Activated CD4-positive, alpha-beta memory T cell treated with anti-CD3 and anti-CD28 coated beads, Interleukin-2, amount 10 ng/mL, durations not matched to agents 7 days and 5 days (primary cell): ENCODE measurements at regions of chr17 and their contacts with region 1.

Region 1: GRCh38 chr17:75319904-75320691 is 30.9 kb upstream of the SLC25A19 start:
- DNase-seq: no peak
- H3K4me3 Mint-ChIP-seq: no peak overlapping the region
- H3K27ac Mint-ChIP-seq: no peak overlapping the region
- H3K4me1 Mint-ChIP-seq: peaks cover 22% of the 10 kb centered on the region
- H3K27me3 Mint-ChIP-seq: no peaks in the 10 kb centered on the region

Region 2: GRCh38 chr17:75295201-75296158 is 24.6 kb before region 1 on chr17:
- CTCF ChIA-PET with region 1: interaction called, 12 read pairs
- POLR2A ChIA-PET with region 1: interaction called, 16 read pairs
- DNase-seq: no peak
- H3K4me3 Mint-ChIP-seq: peak overlapping the region; percentile 46
- H3K27ac Mint-ChIP-seq: peak overlapping the region; percentile 87
- H3K4me1 Mint-ChIP-seq: peaks cover 36% of the 10 kb centered on the region
- H3K27me3 Mint-ChIP-seq: no peaks in the 10 kb centered on the region

Region 3: GRCh38 chr17:75338335-75338734 is 18.2 kb after region 1 on chr17:
- CTCF ChIA-PET with region 1: interaction called, 30 read pairs
- POLR2A ChIA-PET with region 1: interaction called, 4 read pairs
- DNase-seq: no peak
- H3K4me3 Mint-ChIP-seq: peak overlapping the region; percentile 38
- H3K27ac Mint-ChIP-seq: peak overlapping the region; percentile 80
- H3K4me1 Mint-ChIP-seq: peaks cover 57% of the 10 kb centered on the region
- H3K27me3 Mint-ChIP-seq: no peaks in the 10 kb centered on the region

Region 4: DNA sequence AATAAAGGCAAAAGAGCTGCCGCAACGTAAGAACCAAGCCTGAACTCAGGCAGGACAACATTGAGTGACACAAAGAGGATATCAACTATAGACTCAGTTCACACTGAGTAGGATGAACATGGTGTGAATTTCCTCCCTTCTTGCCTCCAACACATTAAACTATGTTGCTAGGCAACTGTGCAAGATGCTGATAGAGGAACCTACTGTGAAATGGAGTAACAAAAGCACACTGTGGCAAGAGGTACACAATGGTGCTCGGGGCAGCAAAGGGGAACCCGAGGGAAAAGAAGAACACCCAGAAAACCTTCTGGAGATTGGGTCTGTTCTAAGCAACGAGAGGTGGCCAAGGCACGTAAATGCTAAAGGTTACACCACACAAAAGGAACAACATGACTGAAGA is 51.2 kb after region 1 on chr17:
- CTCF ChIA-PET with region 1: interaction called, 18 read pairs
- POLR2A ChIA-PET with region 1: no interaction called
- DNase-seq: no peak
- H3K4me3 Mint-ChIP-seq: no peak overlapping the region
- H3K27ac Mint-ChIP-seq: peak overlapping the region; percentile 41
- H3K4me1 Mint-ChIP-seq: peaks cover 55% of the 10 kb centered on the region
- H3K27me3 Mint-ChIP-seq: no peaks in the 10 kb centered on the region

Region 5: DNA sequence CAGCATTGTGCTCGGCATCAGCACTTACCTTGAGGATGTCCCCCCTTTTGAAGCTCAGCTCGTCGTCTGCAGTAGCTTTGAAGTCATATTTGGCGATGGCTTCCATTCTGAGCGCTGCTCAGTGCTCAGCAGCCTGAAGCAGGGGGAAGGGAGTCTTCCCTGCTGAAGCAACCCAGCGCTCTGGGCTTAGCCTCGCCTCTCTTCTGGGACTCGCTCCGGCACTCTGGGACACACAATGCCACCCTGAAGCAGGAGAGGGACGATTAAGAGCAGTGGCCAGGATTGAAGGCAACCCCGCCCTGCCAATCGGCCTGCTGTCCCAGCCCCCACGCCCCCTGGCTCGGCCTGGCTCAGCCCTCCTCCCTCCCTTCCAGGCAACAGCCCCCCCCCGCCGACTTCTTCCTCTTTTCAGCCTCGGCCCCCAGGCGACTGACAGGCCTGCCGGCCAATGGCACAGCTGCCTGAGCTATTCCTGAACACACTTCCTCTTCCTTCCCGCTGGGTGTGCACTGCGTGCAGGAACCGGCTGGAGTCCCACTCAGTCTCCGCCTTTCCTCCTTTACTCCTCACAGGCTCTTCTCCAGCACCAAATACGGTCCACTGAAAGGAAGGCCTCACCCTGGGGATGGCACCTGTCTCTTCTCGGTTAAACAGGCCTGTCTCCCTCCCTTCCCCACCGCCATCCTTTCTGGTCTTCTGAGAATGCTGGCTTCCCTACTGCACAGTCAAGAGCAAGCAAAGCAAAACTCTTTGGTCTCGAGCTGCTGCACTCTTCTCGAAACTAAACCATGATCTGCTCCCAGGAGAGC is 73.6 kb after region 1 on chr17:
- CTCF ChIA-PET with region 1: interaction called, 21 read pairs
- POLR2A ChIA-PET with region 1: interaction called, 7 read pairs
- DNase-seq: peak; percentile 86
- H3K4me3 Mint-ChIP-seq: peak overlapping the region; percentile 90
- H3K27ac Mint-ChIP-seq: peak overlapping the region; percentile 59
- H3K4me1 Mint-ChIP-seq: peaks cover 72% of the 10 kb centered on the region
- H3K27me3 Mint-ChIP-seq: no peaks in the 10 kb centered on the region

Region 6: GRCh38 chr17:75412455-75413317 is 92.6 kb after region 1 on chr17:
- CTCF ChIA-PET with region 1: interaction called, 46 read pairs
- POLR2A ChIA-PET with region 1: interaction called, 6 read pairs
- DNase-seq: peak; percentile 81
- H3K4me3 Mint-ChIP-seq: no peak overlapping the region
- H3K27ac Mint-ChIP-seq: peak overlapping the region; percentile 29
- H3K4me1 Mint-ChIP-seq: peaks cover 26% of the 10 kb centered on the region
- H3K27me3 Mint-ChIP-seq: peaks cover 12% of the 10 kb centered on the region